ENCODE measurements at regions of chr6 and their contacts with region 1.

Region 1: DNA sequence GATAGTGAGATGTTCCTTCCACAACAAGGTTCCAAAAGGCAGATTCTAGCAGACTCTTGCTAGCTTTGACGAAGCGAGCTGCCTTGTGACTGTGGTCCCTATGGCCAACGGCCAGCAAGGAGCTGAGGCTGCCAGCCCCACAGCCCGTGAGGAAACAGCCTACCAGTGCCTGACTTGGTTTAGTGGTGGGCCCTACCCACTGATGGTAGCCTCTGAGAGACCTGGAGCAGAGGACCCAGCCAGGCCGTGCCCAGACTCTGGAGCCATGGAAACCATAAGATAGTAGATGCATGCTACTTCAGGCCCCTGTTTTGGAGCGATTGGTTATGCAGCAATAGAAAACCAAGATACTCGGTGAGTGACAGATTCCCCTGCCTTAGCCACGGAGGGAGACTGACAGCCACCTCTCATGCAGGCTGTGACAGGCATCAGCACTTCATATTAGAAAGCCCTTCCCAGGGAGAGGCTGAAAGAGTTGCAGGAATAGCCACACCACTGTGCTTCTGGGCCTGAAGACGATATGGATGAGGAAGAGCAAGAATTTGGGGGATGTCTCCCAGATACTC is 19.2 kb downstream of the PSMG4 start:
- H3K4me3 Mint-ChIP-seq: no peak overlapping the region
- H3K27ac Mint-ChIP-seq: no peak overlapping the region
- H3K4me1 Mint-ChIP-seq: no peaks in the 10 kb centered on the region
- H3K27me3 Mint-ChIP-seq: no peaks in the 10 kb centered on the region

Region 2: DNA sequence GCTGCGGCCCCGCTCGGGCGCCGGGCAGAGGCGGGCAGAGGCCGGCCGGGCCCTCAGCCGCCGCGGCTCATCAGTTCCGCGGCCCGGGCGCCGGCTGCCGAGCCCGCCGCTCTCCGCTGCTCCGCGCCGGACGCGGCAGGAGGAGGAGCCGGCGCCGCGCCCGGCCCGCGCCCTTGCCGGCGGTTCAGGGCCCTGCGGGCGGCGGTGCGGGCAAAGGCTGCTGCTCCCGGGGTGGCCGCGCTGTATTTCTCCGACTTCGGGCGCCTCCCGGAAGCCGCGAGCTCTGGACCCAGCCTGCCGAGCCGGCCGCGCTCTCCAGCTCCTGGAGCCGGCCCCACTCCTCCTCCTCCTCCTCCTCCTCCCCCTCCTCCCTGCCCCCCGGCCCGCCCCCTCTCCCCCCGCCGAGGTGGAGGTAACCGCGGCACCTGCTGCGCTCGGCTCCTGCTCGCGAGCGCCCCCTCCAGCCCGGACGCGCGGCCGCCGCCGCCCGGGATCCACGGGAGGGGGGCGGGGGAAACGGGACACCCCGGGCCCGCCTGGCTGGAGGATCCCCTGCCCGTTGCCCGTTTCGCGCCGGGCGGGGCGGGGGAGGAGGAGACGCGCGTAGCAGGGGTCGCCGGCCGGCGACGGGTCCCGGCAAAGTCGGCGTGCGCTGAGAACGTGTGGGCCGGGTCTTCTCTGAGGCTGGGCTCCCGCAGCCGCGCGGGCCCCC is 179.0 kb after region 1 on chr6 and contains the start of gene SLC22A23:
- intact Hi-C with region 1: loop called (anchors 2 kb)
- H3K4me3 Mint-ChIP-seq: peak within 1 kb of the TSS; percentile 61
- H3K27ac Mint-ChIP-seq: no peak within 1 kb of the TSS
- H3K4me1 Mint-ChIP-seq: peaks cover 8% of the 10 kb centered on the region
- H3K27me3 Mint-ChIP-seq: peaks cover 52% of the 10 kb centered on the region

Region 3: DNA sequence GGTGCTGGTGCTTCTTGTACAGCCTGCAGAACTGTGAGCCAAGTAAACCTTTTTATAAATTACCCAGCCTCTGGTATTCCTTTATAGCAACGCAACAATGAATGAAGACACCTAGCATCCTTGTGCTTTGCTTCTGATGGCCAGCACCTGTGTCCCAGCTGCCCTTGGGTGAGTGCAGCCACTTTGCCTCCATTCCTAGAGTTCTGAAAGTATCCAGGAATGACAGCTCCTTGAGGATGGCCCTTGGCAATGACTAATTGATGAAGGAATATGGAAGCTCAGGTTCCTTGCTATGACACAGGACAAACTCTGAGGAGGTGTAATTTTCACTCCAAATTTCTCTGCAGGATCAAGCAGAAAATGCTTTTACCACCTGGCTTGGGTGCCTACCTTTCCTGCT is 234.0 kb after region 1 on chr6:
- intact Hi-C with region 1: loop called (anchors 1 kb)
- H3K4me3 Mint-ChIP-seq: no peak overlapping the region
- H3K27ac Mint-ChIP-seq: no peak overlapping the region
- H3K4me1 Mint-ChIP-seq: no peaks in the 10 kb centered on the region
- H3K27me3 Mint-ChIP-seq: peaks cover 6% of the 10 kb centered on the region

Region 4: DNA sequence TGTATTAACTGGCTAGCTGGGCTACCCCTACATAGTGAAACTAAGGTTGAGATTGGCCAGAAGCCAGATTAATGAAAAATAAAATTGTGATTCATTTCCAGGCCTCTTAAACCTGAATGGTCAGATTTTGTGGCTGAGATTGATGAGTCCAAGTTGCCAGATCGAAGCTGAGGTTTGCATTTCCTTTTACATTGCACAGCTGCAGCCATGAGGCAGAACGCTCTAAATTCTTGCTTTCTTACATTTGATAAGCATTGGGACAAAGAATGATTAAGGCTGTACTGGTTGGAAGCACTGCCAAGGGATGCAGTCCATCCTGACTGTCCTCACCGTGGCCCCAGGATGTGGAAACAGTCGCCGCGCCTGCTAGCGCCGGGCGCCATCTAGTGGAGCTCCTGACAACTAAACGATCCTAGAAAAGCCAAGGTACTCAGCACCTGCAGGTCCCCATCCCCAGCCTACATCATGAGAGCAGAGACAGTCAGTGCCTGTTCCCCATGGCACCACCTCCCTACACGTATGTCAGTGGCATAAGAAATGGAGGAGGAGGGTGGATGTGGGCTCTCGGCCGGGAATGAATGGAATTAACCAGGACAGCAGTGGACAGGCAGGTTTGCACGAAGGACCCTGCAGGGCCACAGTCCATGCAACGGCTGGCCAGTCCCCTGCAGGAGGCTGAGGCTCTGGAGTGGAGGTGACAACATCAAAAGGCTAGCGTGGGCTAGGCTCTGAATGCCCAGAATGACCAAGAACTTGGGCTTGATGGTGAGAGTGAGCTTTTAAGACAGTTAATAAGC is 454.6 kb after region 1 on chr6:
- intact Hi-C with region 1: loop called (anchors 1 kb)
- H3K4me3 Mint-ChIP-seq: no peak overlapping the region
- H3K27ac Mint-ChIP-seq: no peak overlapping the region
- H3K4me1 Mint-ChIP-seq: peaks cover 9% of the 10 kb centered on the region
- H3K27me3 Mint-ChIP-seq: no peaks in the 10 kb centered on the region

Region 5: GRCh38 chr6:3990692-3991501 is 713.0 kb after region 1 on chr6:
- intact Hi-C with region 1: loop called (anchors 5 kb)
- H3K4me3 Mint-ChIP-seq: no peak overlapping the region
- H3K27ac Mint-ChIP-seq: peak overlapping the region; percentile 60
- H3K4me1 Mint-ChIP-seq: peaks cover 16% of the 10 kb centered on the region
- H3K27me3 Mint-ChIP-seq: no peaks in the 10 kb centered on the region

Measured in dendritic cell treated with granulocyte-macrophage colony-stimulating factor and Interleukin-4, amounts not matched to agents 40 ng/mL and 50 ng/mL, for 4 days (primary cell).